Transverse colon (tissue), 4 donors: ENCODE measurements at regions of chr20 and their contacts with region 1.

Region 1: DNA sequence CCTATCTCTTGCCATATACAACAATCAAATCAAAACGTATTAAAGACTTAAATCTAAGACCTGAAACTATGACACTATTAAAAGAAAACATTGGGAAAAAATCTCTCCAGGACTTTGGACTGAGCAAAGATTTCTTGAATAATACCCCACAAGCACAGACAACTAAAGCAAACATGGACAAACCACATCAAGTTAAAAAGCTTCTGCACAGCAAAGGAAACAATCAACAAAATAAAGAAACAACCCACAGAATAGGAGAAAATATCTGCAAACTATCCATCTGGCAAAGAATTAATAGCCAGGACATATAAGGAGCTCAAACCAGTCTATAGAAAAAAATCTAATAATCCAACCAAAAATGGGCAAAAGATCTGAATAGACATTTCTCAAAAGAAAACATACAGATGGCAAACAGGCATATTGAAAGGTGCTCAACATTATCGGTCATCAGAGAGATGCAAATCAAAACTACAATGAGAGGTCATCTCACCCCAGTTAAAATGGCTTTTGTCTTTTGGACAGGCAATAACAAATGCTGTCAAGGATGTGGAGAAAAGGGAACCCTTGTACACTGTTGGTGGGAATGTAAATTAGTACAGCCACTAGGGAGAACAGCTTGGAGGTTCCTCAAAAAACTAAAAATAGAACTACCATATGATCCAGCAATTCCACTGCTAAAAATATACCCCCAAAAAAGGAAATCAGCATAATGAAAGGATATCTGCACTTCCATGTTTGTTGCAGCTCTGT is 76.2 kb downstream of the SNX5 start:
- DNase-seq: no peak
- H3K4me3 ChIP-seq: no peak overlapping the region
- H3K27ac ChIP-seq: no peak overlapping the region
- H3K4me1 ChIP-seq: peaks cover 0 to 19% (median 6%) of the 10 kb centered on the region in 4 donors
- H3K27me3 ChIP-seq: no peaks in the 10 kb centered on the region
- CTCF ChIP-seq: no peak
- EP300 ChIP-seq: no peak
- POLR2A ChIP-seq: no peak

Region 2: DNA sequence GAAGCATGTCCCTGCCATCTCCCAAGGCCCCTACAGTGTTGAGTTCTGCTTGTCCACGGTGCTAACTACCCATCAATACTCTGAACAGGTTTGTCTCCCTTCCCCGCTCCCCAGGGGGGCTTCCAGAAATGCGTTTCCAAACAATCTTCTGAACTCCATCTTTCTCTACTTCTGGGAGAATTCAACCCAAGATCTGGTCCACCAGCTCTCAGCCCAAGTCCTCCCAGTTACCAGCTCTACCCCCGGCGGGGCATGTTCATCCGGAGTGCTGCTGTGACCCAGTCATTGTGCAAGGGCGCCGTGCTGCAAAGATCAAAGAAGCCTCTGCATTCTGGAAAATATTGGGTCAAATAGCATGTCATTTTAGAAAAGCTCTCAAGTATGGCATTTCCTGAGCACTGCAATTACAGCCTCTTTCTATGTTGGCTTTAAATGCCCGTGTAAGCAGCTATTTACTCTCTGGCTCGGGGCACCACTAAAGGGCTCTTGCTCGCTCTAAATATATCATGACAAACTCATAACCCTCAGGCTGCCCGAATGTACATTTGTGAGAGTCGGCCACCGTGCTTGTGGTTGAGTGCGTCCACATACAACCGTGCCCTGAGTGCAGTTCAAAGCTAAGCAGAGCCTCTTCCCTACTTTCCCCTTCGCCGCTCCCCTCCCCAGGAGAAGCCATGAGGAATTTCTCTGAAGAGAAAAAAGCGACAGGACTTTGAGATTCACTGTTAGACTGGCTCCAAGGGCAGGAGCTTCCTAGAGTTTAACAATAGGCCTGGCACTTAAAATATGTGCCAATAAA is 121.0 kb before region 1 on chr20:
- in situ Hi-C with region 1: no loop called
- intact Hi-C with region 1: no loop called
- DNase-seq: no peak
- H3K4me3 ChIP-seq: no peak overlapping the region
- H3K27ac ChIP-seq: no peak overlapping the region
- H3K4me1 ChIP-seq: no peaks in the 10 kb centered on the region
- H3K27me3 ChIP-seq: no peaks in the 10 kb centered on the region
- CTCF ChIP-seq: no peak
- EP300 ChIP-seq: no peak
- POLR2A ChIP-seq: no peak

Region 3: DNA sequence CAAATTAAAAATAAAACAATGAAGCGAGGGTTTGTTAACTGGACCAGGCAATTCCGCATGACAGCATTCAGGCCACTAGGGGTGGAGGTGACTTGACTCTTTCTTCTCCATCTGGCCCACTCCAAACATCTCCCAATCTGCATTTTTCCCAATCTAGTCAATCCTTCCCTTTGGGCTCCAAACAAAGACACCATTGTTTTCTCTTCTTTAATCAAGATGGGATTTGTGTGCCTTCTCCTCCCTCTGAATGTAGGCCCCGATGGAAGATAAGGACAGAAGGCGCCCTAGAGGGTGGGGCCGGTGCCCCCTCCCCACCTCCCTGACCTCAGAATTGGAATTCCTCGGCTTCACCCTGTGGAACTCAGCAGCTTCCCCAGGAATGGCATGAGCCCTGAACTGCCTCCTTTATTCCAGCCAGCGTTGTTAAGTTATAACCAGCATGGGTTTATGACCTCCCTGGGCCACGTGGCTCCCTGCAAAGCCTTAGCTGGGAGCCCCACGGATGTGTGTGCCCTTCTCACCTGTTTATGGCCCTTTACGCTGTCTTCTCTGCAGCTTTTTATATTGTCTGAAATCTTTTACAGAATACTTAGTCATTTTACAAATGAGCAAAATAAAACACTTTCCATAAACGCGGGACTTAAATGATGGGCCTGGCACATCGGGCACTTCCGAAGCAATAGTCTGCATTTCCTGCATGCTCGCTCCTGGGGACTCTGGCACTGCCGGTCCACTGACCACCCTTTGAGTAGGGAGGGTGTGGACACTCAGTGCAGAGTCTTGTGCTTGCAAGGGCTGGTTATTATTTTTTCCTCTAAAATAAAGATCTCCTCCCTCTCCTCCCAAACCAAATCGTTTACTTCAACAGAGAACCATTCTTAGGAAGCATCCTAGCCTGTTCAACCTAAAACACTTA is 140.9 kb after region 1 on chr20:
- in situ Hi-C with region 1: no loop called
- intact Hi-C with region 1: no loop called
- DNase-seq: peak; percentile 82
- H3K4me3 ChIP-seq: no peak overlapping the region
- H3K27ac ChIP-seq: peak overlapping the region; percentile 83 to 87 (median 85)
- H3K4me1 ChIP-seq: peaks cover 0 to 39% (median 28%) of the 10 kb centered on the region in 4 donors
- H3K27me3 ChIP-seq: no peaks in the 10 kb centered on the region
- CTCF ChIP-seq: peak in 2 of 5 experiments; percentile 19 to 37
- EP300 ChIP-seq: no peak
- POLR2A ChIP-seq: peak; percentile 40

Region 4: DNA sequence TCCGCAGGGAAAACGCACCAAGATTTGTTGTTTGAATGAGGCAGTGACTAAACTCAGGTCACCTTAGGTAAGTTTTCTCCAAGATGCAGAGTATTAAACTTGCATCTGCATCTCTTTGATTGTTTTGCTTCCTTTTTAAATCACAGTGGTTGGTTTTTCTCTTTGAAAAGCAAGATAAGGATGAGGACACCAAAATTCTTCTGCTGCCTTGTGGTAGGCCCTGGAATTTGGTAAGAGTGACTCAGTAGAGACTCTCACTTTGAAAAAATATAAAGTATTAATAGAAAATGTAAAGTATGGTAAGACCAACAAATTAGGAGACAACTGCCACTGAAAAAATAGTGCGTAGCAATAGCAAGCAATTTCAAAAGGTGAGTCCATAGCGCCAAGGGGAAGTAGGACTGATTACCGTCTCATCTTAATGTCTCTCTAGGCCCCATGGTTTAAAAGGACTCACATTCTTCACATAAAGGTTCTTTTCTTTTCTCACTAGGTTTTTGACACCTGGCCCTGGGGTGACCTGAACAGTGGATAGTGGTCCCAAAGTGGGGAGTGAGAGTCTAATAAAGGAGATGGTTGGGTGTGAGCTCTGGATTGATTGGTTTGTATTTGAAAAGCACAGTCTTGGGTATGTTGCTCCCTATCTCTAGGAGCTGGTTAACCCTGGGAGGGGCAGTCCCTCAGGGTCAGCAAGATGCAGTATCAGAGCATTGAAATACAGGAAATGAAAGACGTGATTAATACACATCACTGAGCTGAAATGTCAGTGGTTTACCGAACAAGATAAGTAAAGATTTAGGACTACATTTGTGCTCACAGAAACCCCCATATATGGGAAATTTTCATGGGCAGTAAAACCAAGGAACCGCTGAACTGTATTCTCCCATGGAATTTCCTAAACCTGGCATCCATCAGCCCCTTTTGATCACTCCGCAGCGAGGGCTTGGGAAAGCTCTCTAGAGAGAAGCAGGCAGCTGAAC is 1541.3 kb after region 1 on chr20:
- in situ Hi-C with region 1: no loop called
- intact Hi-C with region 1: loop called (anchors 5 kb)
- DNase-seq: no peak
- H3K4me3 ChIP-seq: no peak overlapping the region
- H3K27ac ChIP-seq: no peak overlapping the region
- H3K4me1 ChIP-seq: peaks cover 0 to 3% (median 0%) of the 10 kb centered on the region in 4 donors
- H3K27me3 ChIP-seq: no peaks in the 10 kb centered on the region
- CTCF ChIP-seq: no peak
- EP300 ChIP-seq: no peak
- POLR2A ChIP-seq: no peak